GM23248 (cell line): ENCODE measurements at regions of chr10 and their contacts with region 1.

Region 1: DNA sequence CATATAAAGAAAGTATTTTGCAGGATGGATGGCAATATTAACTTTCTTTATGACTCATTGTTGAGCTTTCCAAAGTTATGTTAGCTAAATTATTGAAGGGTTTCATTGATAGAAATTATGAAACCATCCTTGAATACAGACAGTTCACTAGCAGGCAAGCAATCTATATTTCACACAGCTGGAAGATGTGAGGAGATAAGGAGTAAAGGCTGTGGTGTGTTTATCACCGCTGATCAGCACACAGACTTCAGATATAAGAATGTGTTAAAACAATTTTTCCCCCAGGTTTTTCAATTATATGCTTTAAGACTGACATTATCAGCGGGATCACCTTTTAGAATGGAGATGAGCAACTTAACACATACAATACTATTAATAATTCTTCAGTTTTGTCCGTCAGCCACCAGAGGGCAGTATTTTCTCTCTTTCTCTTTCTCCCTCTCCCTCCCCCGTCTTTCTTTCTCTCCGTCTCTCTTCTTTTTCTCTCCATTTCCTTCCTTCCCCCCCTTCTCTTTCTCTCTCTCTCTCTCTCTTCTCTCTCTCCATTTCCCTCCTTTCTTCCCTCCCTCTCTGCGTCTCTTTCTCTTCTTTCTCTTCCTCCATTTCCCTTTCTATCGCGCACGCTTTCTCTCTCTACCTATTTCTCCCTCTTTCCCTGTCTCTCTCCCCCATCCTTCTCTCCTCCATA is 62.9 kb upstream of the FAM171A1 start:
- DNase-seq: peak; percentile 67
- H3K4me3 ChIP-seq: peak overlapping the region; percentile 78
- H3K27ac ChIP-seq: no peak overlapping the region
- H3K4me1 ChIP-seq: peaks cover 8% of the 10 kb centered on the region
- H3K27me3 ChIP-seq: peaks cover 8% of the 10 kb centered on the region; the same call in 1 of the 2 replicates

Region 2: DNA sequence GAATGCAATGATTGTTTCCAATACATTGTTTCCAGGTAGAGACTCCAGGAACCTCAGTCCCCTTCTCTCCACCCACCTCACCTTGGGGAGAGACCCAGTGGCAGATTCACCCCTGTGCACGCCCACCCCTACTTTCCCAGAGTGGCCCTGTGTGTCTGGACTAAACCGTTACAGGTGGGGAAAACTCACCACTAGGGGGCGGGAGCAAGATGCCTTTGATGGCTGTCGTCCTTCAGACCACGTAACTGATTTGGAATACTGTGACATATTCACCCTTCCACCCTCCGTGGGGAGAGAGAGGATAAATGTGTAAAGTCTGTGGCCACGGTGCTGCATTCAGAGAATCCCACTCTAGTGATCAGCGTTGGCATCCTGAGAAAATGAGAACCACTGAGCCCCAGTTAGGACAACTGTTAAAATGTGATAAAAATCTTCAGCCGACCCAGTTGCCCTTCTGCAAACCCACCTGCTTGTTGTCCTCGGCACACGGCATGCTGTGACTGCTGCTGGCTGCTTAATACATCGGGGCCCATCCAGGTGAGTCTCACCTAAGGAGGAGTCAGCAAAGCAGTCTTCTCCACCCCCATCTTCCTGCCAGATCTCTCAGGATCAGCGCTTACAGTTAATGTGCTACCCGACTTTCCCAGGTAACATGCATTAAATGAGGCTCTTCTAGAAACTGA is 224.0 kb before region 1 on chr10:
- in situ Hi-C with region 1: no loop called
- DNase-seq: peak; percentile 82
- H3K4me3 ChIP-seq: no peak overlapping the region
- H3K27ac ChIP-seq: no peak overlapping the region
- H3K4me1 ChIP-seq: peaks cover 15% of the 10 kb centered on the region
- H3K27me3 ChIP-seq: no peaks in the 10 kb centered on the region

Region 3: GRCh38 chr10:15719899-15720634 is 286.1 kb after region 1 on chr10 and contains the start of gene ITGA8:
- in situ Hi-C with region 1: loop called (anchors 5 kb)
- DNase-seq: peak; percentile 50
- H3K4me3 ChIP-seq: peak within 1 kb of the TSS; percentile 60
- H3K27ac ChIP-seq: no peak within 1 kb of the TSS
- H3K4me1 ChIP-seq: no peaks in the 10 kb centered on the region
- H3K27me3 ChIP-seq: peaks cover 35% of the 10 kb centered on the region
- total RNA-seq, gene ITGA8: 0.32 TPM in 1 of 2 replicates, not detected in the other

Region 4: GRCh38 chr10:15829495-15829894 is 395.5 kb after region 1 on chr10:
- in situ Hi-C with region 1: loop called (anchors 5 kb)
- DNase-seq: no peak
- H3K4me3 ChIP-seq: no peak overlapping the region
- H3K27ac ChIP-seq: no peak overlapping the region
- H3K4me1 ChIP-seq: no peaks in the 10 kb centered on the region
- H3K27me3 ChIP-seq: no peaks in the 10 kb centered on the region